Mammary epithelial cell (primary cell): ENCODE measurements at regions of chr12 and their contacts with region 1.

Region 1: DNA sequence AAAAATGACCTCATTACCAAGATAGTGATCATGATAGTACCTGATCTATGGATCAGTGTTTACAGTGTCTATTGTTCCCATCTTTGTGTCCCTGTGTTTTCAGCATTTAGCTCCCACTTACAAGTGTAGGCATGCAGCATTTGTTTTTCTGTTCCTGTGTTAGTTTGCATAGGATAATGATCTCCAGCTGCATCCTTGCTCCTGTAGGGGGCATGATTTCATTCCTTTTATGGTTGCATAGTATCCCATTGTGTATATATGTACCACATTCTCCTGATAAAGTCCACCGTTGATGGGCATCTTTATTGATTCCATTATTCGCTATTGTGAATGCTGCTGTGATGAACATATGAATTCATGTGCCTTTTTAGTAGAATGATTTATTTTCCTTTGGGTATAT is 215.4 kb upstream of the NAV3 start:
- DNase-seq: peak; percentile 38
- H3K4me3 ChIP-seq: no peak overlapping the region
- H3K27ac ChIP-seq: no peak overlapping the region
- H3K4me1 ChIP-seq: no peaks in the 10 kb centered on the region
- H3K27me3 ChIP-seq: no peaks in the 10 kb centered on the region
- CTCF ChIP-seq: peak; percentile 51 to 75

Region 2: DNA sequence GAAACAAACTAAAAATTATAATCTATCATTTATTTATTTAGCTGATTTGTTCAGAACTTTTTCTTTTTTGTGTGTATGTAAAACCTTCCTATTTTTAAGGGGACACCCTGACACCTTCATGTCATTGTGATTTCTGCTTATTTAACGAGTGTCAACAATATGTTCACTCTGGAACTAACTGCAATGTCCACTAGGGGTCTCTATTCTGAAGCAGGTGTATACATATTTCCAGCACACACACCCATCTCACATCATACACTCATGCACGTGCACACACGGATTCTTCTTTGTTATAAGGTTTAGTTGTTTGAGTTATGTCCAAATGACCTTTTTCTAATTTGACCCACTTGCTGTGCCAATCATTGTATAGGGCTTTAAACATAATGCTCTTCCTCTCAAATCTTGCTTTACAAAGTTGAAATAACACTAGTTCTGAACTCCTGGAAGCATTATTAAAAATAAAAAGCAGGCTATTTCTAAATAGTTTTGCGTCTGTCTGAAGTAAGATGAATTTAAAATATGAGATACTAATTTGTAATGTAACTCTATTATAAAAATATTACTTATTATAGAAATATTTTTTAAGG is 565.5 kb before region 1 on chr12:
- CTCF ChIA-PET with region 1: no interaction called
- dilution Hi-C with region 1: no loop called
- in situ Hi-C with region 1: no loop called
- intact Hi-C with region 1: loop called (anchors 10 kb)
- DNase-seq: peak; percentile 52
- H3K4me3 ChIP-seq: no peak overlapping the region
- H3K27ac ChIP-seq: no peak overlapping the region
- H3K4me1 ChIP-seq: no peaks in the 10 kb centered on the region
- H3K27me3 ChIP-seq: no peaks in the 10 kb centered on the region
- CTCF ChIP-seq: peak; percentile 81

Region 3: GRCh38 chr12:77152623-77153193 is 462.6 kb before region 1 on chr12:
- CTCF ChIA-PET with region 1: no interaction called
- dilution Hi-C with region 1: no loop called
- in situ Hi-C with region 1: no loop called
- intact Hi-C with region 1: loop called (anchors 2 kb)
- DNase-seq: peak; percentile 19
- H3K4me3 ChIP-seq: no peak overlapping the region
- H3K27ac ChIP-seq: no peak overlapping the region
- H3K4me1 ChIP-seq: peaks cover 6% of the 10 kb centered on the region
- H3K27me3 ChIP-seq: no peaks in the 10 kb centered on the region
- CTCF ChIP-seq: peak; percentile 48 to 70

Region 4: DNA sequence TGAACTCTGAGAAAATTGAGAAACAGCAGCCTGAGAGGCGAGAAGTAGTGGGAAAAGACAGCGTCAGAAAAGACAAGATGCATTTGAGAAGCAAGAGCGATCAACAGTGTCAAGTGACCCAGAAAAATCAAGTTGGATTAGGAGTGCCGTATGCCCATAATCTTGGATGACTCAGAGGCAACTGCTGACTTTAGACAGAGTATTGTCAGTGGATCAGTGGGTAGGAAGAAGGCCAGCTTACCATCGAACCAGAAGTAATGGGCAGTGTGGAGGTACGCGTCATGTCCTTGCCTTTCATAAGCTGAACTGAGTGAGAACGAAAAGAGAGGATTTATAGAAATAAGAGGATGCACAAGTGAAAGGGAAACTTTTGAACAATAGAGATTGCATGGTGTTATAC is 64.4 kb after region 1 on chr12:
- CTCF ChIA-PET with region 1: no interaction called
- dilution Hi-C with region 1: no loop called
- in situ Hi-C with region 1: loop called (anchors 5 to 10 kb)
- intact Hi-C with region 1: no loop called
- DNase-seq: no peak
- H3K4me3 ChIP-seq: no peak overlapping the region
- H3K27ac ChIP-seq: no peak overlapping the region
- H3K4me1 ChIP-seq: no peaks in the 10 kb centered on the region
- H3K27me3 ChIP-seq: no peaks in the 10 kb centered on the region
- CTCF ChIP-seq: no peak

Region 5: GRCh38 chr12:77685112-77685511 is 69.8 kb after region 1 on chr12:
- CTCF ChIA-PET with region 1: no interaction called
- dilution Hi-C with region 1: no loop called
- in situ Hi-C with region 1: loop called (anchors 5 to 10 kb)
- intact Hi-C with region 1: loop called (anchors 1 kb)
- DNase-seq: peak; percentile 60
- H3K4me3 ChIP-seq: peak overlapping the region in 1 of 3 experiments; percentile 25
- H3K27ac ChIP-seq: no peak overlapping the region
- H3K4me1 ChIP-seq: peaks cover 3% of the 10 kb centered on the region
- H3K27me3 ChIP-seq: no peaks in the 10 kb centered on the region
- CTCF ChIP-seq: peak; percentile 62 to 77

Region 6: GRCh38 chr12:77724367-77724957 is 109.1 kb after region 1 on chr12:
- CTCF ChIA-PET with region 1: no interaction called
- dilution Hi-C with region 1: no loop called
- in situ Hi-C with region 1: no loop called
- intact Hi-C with region 1: loop called (anchors 1 kb)
- DNase-seq: peak; percentile 25
- H3K4me3 ChIP-seq: no peak overlapping the region
- H3K27ac ChIP-seq: no peak overlapping the region
- H3K4me1 ChIP-seq: peaks cover 9% of the 10 kb centered on the region
- H3K27me3 ChIP-seq: no peaks in the 10 kb centered on the region
- CTCF ChIP-seq: peak; percentile 71 to 72

Region 7: DNA sequence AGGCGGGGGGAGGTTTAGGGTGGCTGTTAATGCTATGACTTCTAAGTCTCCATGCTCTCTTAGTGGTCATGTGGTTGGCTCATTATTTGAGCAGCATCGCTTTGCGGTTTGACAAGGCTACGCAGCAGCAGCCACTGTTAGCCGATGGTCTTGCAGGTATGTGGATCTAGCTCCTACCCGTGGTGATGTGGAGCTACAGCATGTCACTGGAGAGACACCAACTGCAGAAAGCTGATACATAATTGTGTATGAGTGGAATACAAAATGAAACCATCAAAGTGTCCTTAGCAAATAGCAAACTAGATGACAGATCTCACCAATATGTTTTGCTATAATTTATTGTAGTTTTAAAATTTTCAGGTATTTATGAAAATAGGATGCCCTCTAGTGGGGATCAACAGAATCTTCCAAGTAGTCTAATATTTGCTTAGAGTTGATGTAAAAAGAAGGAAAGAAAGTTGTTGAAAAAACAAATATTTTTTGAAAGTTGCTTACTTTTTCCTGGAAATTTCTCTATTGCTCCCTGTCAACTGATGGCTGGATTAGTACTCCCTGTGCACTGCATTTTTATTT is 310.3 kb after region 1 on chr12:
- CTCF ChIA-PET with region 1: no interaction called
- dilution Hi-C with region 1: no loop called
- in situ Hi-C with region 1: no loop called
- intact Hi-C with region 1: loop called (anchors 2 kb)
- DNase-seq: peak; percentile 77
- H3K4me3 ChIP-seq: no peak overlapping the region
- H3K27ac ChIP-seq: no peak overlapping the region
- H3K4me1 ChIP-seq: peaks cover 5% of the 10 kb centered on the region
- H3K27me3 ChIP-seq: no peaks in the 10 kb centered on the region
- CTCF ChIP-seq: peak; percentile 98 to 99